AG04450 (cell line): ENCODE measurements at regions of chr6 and their contacts with region 1.

Region 1: GRCh38 chr6:63764318-63764916 is 128.8 kb downstream of the PHF3 start:
- DNase-seq: peak; percentile 15
- H3K4me3 ChIP-seq: no peak overlapping the region
- H3K27ac ChIP-seq: no peak overlapping the region
- H3K27me3 ChIP-seq: no peaks in the 10 kb centered on the region
- CTCF ChIP-seq: peak; percentile 43

Region 2: DNA sequence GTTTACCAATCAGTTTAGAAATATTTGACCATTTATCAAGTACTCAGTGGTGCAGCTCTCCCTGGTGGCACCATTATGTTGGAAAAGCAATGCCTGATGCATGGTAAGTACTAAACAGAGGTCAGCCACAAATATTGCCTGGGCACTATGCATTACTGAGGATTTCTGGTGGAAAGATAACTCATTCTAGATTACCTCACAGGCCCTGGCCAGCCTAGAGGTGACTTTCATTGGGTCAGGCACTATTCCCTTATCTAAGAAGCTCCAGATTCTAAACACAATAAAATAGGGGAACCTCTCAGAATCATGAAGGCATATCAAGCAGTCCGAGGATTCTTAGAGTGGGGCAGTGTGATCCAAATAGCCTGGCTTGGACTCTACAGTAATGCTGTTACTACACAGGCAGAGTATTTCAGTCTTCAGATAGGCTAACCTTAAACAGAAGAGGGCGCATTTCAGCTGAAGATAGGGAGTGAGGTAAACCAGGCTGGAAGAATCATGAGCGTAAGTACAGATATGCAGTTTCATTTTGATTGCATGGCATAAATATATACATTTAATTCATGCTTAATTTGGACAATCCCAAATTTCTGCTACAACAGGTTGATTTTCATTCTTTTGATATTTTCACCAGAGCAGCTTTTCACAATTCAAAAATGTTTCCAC is 456.7 kb before region 1 on chr6:
- CTCF ChIA-PET with region 1: interaction called, 10 read pairs
- POLR2A ChIA-PET with region 1: no interaction called
- DNase-seq: peak; percentile 23
- H3K4me3 ChIP-seq: no peak overlapping the region
- H3K27ac ChIP-seq: no peak overlapping the region
- H3K27me3 ChIP-seq: no peaks in the 10 kb centered on the region
- CTCF ChIP-seq: peak; percentile 68

Region 3: DNA sequence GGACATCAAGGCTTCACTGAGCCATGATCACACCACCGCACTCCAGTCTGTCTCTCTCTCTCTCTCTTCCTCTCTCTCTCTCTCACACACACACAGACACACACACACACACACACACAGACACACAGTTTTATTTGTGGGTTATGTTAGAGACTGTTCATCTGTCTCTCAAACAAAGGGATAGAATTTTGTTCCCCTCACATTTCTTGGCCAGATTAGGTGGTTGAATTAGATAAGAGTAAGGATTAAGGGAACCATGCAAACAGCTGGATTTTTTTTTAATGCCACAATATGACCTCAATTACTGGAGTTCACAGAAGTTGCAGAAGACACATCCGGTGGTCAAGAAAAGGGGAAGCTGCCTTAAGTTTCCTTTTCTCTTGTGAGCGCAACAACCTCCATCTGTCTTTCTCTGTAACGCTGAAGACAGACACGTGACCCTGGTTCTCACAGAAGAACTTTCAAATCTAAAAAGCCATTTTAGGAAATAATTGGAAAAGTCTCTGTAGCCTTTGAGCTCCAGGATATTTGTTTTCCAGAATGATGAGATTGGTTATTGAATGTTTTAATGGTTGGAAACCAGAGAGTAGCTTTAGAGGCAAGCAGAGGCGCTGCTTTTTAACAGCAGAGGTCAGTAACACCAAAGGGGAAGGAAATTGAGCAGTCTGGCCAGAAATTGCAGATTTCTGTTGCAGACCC is 411.7 kb before region 1 on chr6:
- CTCF ChIA-PET with region 1: interaction called, 150 read pairs
- POLR2A ChIA-PET with region 1: no interaction called
- DNase-seq: peak; percentile 15
- H3K4me3 ChIP-seq: no peak overlapping the region
- H3K27ac ChIP-seq: no peak overlapping the region
- H3K27me3 ChIP-seq: no peaks in the 10 kb centered on the region
- CTCF ChIP-seq: peak; percentile 73

Region 4: DNA sequence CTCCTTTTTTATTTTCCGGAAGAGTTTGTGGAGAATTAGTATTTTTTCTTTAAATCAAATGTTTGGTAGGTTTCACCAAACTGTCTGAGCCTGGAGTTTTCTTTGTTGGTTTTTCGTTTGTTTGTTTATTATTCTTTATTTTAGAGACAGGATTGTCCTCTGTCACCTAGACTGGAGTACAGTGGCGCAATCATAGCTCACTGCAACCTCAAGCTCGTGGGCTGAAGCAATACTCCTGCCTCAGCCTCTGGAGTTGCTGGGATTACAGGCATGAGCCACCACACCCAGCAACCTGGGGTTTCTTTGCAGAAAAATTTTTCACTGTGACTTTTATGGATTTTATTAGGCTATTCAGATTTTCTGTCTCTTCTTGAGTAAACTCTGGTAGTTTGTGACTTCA is 312.3 kb before region 1 on chr6:
- CTCF ChIA-PET with region 1: no interaction called
- POLR2A ChIA-PET with region 1: no interaction called
- DNase-seq: no peak
- H3K4me3 ChIP-seq: no peak overlapping the region
- H3K27ac ChIP-seq: no peak overlapping the region
- H3K27me3 ChIP-seq: no peaks in the 10 kb centered on the region
- CTCF ChIP-seq: no peak

Region 5: DNA sequence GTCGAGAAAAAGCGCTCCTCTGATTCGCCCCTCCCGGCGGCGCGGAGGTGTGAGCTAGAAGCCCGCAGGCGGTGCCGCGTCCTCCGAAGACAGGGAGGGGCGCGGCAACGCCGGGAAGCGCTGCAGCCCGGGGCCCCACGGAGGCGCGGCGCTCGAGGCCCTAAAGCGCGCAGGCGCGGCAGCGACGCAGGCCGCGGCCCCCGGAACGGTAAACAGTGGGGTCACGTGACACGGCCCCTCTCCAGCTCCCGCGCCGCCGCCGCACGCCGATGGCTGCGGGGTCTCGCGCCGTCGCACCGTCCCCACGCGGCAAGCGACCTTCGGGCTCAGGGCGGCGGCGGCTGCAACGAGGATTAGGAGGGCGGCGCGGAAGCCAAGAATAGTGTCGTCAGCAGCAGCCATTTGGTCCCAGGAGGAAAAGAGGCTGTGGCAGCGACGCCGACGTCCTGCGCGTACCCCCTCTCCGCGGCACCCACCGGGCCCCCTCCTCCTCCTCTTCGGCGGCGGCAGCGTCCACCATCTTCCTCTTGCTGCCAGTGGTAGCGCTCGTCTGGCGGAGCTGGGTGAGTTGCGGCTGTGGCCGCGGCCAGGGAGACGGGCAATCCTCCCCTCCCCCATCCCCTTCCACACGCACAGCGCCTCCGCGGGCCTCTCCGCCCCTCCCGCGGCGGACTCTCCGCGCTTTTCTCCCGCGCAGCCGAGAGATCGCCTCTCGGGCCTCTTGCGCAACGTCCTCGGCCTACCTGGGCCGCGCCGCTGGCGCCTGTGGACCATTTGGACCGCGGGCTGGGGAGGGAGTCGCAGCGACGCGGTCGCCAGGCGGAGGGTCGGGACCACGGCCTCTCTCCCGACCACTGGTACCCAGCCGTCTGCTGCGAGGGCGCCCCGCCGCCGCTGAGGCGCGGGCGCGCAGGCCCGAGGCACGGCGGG is 128.6 kb before region 1 on chr6 and contains the start of gene PHF3:
- CTCF ChIA-PET with region 1: interaction called, 11 read pairs
- POLR2A ChIA-PET with region 1: interaction called, 3 read pairs
- DNase-seq: peak; percentile 59
- H3K4me3 ChIP-seq: peak within 1 kb of the TSS; percentile 80
- H3K27ac ChIP-seq: peak within 1 kb of the TSS; percentile 87
- H3K27me3 ChIP-seq: no peaks in the 10 kb centered on the region
- CTCF ChIP-seq: peak; percentile 25; the same call in 1 of the 2 replicates
- polyA plus RNA-seq, gene PHF3: 16.2 and 26.6 TPM in 2 replicates

Region 6: DNA sequence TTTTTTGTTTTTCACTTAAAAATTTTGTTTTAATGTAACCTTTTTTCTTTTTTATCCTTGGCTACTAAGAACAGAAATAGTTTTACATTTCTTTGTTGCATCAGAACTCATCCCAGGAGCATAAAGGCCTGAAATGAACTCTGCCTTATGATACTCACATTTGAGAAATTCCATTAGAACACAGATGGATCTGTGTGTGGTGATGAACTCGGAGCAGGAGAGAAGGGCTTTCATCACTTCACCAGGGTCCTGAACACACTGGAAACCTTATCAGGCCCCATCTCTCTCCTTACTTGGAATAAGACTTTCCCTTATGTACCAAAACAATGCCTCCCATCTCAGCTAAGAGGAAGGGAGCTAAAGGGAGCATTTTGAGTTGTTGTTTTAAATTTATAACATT is 10.5 kb after region 1 on chr6:
- CTCF ChIA-PET with region 1: interaction called, 11 read pairs
- POLR2A ChIA-PET with region 1: no interaction called
- DNase-seq: no peak
- H3K4me3 ChIP-seq: no peak overlapping the region
- H3K27ac ChIP-seq: no peak overlapping the region
- H3K27me3 ChIP-seq: no peaks in the 10 kb centered on the region
- CTCF ChIP-seq: no peak

Region 7: GRCh38 chr6:63997217-63997616 is 232.8 kb after region 1 on chr6:
- CTCF ChIA-PET with region 1: no interaction called
- POLR2A ChIA-PET with region 1: no interaction called
- DNase-seq: no peak
- H3K4me3 ChIP-seq: no peak overlapping the region
- H3K27ac ChIP-seq: no peak overlapping the region
- H3K27me3 ChIP-seq: no peaks in the 10 kb centered on the region
- CTCF ChIP-seq: no peak